ENCODE measurements at regions of chr12 and their contacts with region 1.

Region 1: DNA sequence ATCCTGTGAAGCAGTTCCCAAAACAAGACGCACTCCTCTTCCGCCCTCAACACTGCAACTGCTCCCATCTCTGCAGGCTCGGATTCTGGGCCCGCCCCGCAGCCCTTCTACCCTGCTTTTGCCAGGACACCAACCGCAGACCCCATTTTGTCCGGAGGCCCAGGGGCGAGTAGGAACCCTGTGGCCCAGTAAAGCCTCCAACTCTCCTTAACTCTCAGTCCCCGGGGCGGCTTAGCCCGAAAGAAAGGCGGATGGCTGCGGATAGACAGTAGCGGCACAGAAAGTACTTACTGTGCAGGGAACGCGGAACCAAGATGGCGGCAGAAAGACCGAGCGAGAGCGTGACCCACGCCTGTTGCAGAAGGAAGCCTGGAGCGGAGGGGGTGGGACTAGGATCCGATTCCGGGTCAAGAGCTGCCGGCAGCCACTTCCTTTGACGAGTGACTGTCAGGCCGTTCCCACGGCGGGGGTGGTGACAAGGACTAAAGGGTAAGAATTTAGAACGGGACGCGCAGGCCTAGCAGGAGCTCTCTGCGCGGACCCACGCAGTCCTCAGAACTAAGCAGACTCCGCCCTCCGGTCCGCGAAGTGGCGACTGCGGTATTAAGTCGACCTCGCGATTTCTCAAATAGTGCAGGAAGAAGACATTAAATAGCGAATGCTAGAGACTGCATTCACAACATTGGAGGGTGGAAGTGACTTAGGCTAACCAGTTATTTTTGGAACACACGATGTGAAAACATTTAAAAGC is at the start of gene NACA:
- DNase-seq: peak; percentile 97 to 99
- ATAC-seq: peak; percentile 96 to 99 (median 98)
- H3K4me3 ChIP-seq: peak within 1 kb of the TSS; percentile 71 to 99 (median 82)
- H3K27ac ChIP-seq: peak within 1 kb of the TSS; percentile 83 to 96 (median 92)
- H3K4me1 ChIP-seq: peaks cover 19 to 49% (median 43%) of the 10 kb centered on the region in 9 donors
- H3K27me3 ChIP-seq: no peaks in the 10 kb centered on the region
- CTCF ChIP-seq: no peak
- total RNA-seq, gene NACA: 476 to 727 (median 613) TPM

Region 2: GRCh38 chr12:56645717-56646446 is 79.3 kb before region 1 on chr12 and contains the start of gene ATP5F1B:
- intact Hi-C with region 1: loop called in 6 of 10 experiments (anchors 1 to 10 kb)
- DNase-seq: peak; percentile 91 to 99
- ATAC-seq: peak; percentile 97 to 99 (median 98)
- H3K4me3 ChIP-seq: peak within 1 kb of the TSS; percentile 72 to 96 (median 87)
- H3K27ac ChIP-seq: peak within 1 kb of the TSS; percentile 88 to 98 (median 95)
- H3K4me1 ChIP-seq: peaks cover 0 to 51% (median 44%) of the 10 kb centered on the region in 9 donors
- H3K27me3 ChIP-seq: no peaks in the 10 kb centered on the region
- CTCF ChIP-seq: peak in 1 of 9 donors; percentile 12
- total RNA-seq, gene ATP5F1B: 2,092 to 3,612 (median 3,330) TPM

Region 3: GRCh38 chr12:56688129-56688845 is 36.9 kb before region 1 on chr12 and contains the start of gene PTGES3:
- intact Hi-C with region 1: loop called in 7 of 10 experiments (anchors 1 to 5 kb)
- DNase-seq: peak; percentile 98
- ATAC-seq: peak; percentile 94 to 97 (median 96)
- H3K4me3 ChIP-seq: peak within 1 kb of the TSS; percentile 78 to 99 (median 90)
- H3K27ac ChIP-seq: peak within 1 kb of the TSS; percentile 93 to 100 (median 98)
- H3K4me1 ChIP-seq: peaks cover 5 to 47% (median 43%) of the 10 kb centered on the region in 9 donors
- H3K27me3 ChIP-seq: no peaks in the 10 kb centered on the region
- CTCF ChIP-seq: peak in 1 of 9 donors; percentile 10
- total RNA-seq, gene PTGES3: 100.0 to 139 (median 110) TPM

Region 4: DNA sequence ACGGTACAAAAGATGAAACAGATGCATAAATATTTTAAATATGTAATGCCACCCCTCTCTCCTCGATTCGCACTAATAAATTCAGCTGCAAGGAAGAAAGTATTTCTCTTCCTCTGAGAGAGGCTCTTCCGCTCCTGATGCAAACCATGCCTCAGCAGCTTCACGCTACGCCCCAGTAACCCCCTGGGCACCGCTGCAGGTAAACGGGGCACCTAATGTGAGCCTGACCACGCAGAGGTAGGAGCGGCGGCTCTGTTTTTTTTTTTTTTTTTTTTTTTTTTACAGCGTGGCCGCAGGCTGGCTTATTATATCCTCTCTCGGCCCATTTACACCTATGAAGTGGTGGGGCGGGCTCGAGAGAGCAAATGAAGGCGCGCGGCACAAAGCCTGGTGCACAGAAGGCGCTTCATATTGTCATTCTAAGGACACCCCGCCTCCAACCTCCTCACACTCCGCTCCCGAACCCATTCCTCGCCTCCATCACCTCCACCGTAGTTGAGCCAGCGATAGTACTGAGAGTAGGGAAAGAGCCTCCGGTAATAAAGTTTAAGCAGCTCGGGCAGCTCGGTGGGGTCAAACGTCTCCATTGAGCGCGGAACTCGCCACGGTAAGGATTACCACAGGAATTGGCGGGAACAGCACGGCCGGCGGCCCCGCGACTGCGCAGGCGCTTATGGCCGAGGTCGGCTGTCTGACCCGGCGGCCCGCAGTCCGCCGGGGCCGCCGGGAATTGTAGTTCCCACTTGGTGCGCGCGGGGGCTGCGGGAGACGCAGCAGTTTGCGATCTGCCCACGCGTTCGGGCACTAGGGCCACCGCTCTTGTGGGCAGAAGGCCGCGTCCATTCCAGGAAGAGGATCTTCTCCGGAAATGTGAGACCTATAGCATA is 26.8 kb after region 1 on chr12 and contains the start of gene PRIM1:
- intact Hi-C with region 1: loop called in 1 of 10 experiments (anchors 2 kb)
- DNase-seq: peak; percentile 76 to 88
- ATAC-seq: peak; percentile 95 to 98 (median 98)
- H3K4me3 ChIP-seq: peak within 1 kb of the TSS; percentile 63 to 80 (median 72)
- H3K27ac ChIP-seq: peak within 1 kb of the TSS in 9 of 10 donors; percentile 22 to 66 (median 43)
- H3K4me1 ChIP-seq: peaks cover 0 to 33% (median 9%) of the 10 kb centered on the region in 9 donors
- H3K27me3 ChIP-seq: no peaks in the 10 kb centered on the region
- CTCF ChIP-seq: peak in 4 of 9 donors; percentile 24 to 44 (median 28)
- total RNA-seq, gene PRIM1: 1.8 to 4.7 (median 3.2) TPM

Region 5: GRCh38 chr12:56775638-56776037 is 50.5 kb after region 1 on chr12:
- intact Hi-C with region 1: no loop called
- DNase-seq: no peak
- ATAC-seq: no peak
- H3K4me3 ChIP-seq: no peak overlapping the region
- H3K27ac ChIP-seq: no peak overlapping the region
- H3K4me1 ChIP-seq: no peaks in the 10 kb centered on the region
- H3K27me3 ChIP-seq: no peaks in the 10 kb centered on the region
- CTCF ChIP-seq: no peak